A673 (cell line): ENCODE measurements at regions of chr20 and their contacts with region 1.

Region 1: GRCh38 chr20:62793912-62794724 is 2.2 kb upstream of the MRGBP start:
- DNase-seq: peak; percentile 95
- H3K4me3 ChIP-seq: peak overlapping the region; percentile 62
- H3K27ac ChIP-seq: peak overlapping the region; percentile 88
- H3K4me1 ChIP-seq: peaks cover 21% of the 10 kb centered on the region
- H3K27me3 ChIP-seq: no peaks in the 10 kb centered on the region
- CTCF ChIP-seq: no peak

Region 2: DNA sequence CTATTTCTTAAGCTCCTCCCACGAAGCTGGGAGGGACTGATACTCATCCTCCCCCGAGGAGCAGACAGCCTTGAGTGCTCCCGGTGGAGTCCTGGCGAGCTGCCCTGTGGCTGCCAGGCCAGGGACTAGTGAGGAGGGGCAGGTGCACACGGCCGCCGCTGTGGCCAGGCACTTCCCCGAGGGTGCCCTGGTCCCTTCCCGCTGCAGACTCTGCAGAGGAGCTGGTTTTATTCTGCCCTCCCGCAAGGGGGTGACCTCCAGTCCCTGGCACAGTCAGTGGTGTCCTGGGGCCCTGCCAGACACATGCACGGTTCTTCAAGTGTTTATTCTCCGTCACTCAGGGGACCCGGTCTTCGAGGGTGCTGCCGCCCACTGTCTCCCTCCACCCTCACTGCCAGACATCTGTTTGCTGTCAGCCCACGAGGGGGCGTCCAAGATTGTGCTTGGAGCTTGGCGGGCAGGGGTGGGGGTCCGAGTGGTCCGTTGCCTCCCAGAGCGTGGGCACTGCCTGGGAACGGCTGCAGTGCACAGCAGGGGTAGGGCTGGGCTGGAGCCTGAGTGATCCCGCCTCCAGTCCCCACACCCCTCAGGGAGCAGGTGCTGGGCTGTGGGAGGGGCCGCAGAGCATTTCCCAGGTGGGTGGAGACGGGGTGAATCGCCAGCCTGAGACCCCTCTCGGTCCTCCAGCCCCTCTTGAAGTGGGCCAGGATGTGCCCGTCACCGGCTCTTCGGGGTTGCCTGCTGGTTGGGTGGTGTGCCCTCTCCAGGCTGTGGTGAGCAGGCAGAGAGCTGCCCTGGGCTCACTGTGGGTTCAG is 384.0 kb before region 1 on chr20:
- CTCF ChIA-PET with region 1: interaction called, 4 read pairs
- POLR2A ChIA-PET with region 1: no interaction called
- intact Hi-C with region 1: loop called (anchors 5 kb)
- DNase-seq: peak; percentile 64
- H3K4me3 ChIP-seq: no peak overlapping the region
- H3K27ac ChIP-seq: no peak overlapping the region
- H3K4me1 ChIP-seq: peaks cover 6% of the 10 kb centered on the region
- H3K27me3 ChIP-seq: no peaks in the 10 kb centered on the region
- CTCF ChIP-seq: peak; percentile 83

Region 3: DNA sequence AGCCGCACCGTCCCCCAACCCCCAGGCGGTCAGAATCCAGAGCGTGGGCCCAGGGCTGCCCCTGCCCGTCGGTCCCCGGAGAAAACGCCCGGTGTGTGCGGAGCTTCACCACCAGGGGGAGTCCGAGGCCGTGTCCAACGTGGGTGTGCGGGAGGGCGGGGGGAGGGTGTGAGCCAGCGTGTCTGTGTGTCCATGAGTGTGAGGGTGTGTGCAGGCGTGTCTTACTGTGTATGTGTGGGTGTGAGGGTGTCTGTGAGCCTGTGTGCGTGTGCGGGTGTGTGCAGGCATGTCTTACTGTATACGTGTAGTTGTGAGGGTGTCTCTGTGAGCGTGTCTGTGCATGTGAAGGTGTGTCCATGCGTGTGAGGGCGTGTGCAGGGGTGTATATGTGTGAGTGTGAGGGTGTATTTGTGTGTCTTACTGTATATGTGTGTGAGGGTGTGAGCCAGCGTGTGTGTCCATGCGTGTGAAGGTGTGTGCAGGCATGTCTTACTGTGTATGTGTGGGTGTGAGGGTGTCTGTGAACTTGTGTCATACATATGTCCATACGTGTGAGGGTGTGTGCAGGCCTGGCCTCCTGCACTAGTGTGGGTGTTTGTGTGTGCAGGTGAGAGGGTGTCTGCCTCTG is 293.8 kb before region 1 on chr20:
- CTCF ChIA-PET with region 1: interaction called, 5 read pairs
- POLR2A ChIA-PET with region 1: no interaction called
- intact Hi-C with region 1: loop called (anchors 1 kb)
- DNase-seq: peak; percentile 79
- H3K4me3 ChIP-seq: no peak overlapping the region
- H3K27ac ChIP-seq: no peak overlapping the region
- H3K4me1 ChIP-seq: no peaks in the 10 kb centered on the region
- H3K27me3 ChIP-seq: no peaks in the 10 kb centered on the region
- CTCF ChIP-seq: peak; percentile 95

Region 4: DNA sequence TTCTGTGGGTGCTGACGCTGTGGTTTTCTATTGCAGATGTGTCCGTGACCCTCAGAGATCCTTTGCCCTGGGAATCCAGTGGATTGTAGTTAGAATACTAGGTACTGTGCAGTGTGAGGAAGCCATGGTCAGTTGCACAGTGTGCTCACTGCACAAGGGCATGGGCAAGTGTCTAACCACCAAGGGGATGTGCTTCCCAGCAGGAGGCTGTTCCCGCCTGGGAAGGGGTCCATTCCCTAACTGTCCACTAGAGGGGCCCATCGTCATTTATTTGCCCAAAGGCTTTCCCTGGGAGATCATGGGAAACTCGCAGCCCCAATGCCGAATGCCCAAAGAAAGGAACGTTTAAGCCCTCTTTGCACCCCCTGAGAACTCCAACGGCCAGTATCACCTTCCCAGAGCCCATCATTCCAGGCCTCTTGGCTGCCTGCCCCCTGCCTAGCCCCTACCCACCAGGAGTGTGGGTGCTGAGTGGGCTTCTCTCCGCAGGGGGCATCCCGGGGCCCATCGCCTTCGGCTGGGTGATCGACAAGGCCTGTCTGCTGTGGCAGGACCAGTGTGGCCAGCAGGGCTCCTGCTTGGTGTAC is 125.6 kb before region 1 on chr20:
- CTCF ChIA-PET with region 1: interaction called, 9 read pairs
- POLR2A ChIA-PET with region 1: no interaction called
- intact Hi-C with region 1: loop called (anchors 1 kb)
- DNase-seq: peak; percentile 86
- H3K4me3 ChIP-seq: no peak overlapping the region
- H3K27ac ChIP-seq: no peak overlapping the region
- H3K4me1 ChIP-seq: no peaks in the 10 kb centered on the region
- H3K27me3 ChIP-seq: no peaks in the 10 kb centered on the region
- CTCF ChIP-seq: peak; percentile 87

Region 5: GRCh38 chr20:62850333-62850974 is 56.3 kb after region 1 on chr20:
- CTCF ChIA-PET with region 1: no interaction called
- POLR2A ChIA-PET with region 1: no interaction called
- intact Hi-C with region 1: no loop called
- DNase-seq: no peak
- H3K4me3 ChIP-seq: no peak overlapping the region
- H3K27ac ChIP-seq: no peak overlapping the region
- H3K4me1 ChIP-seq: peaks cover 5% of the 10 kb centered on the region
- H3K27me3 ChIP-seq: no peaks in the 10 kb centered on the region
- CTCF ChIP-seq: no peak